BJ (cell line): ENCODE measurements at regions of chr3 and their contacts with region 1.

Region 1: GRCh38 chr3:131273401-131273800 is 108.2 kb upstream of the NUDT16 start:
- DNase-seq: no peak
- H3K4me3 ChIP-seq: no peak overlapping the region
- H3K27me3 ChIP-seq: no peaks in the 10 kb centered on the region
- CTCF ChIP-seq: no peak

Region 2: DNA sequence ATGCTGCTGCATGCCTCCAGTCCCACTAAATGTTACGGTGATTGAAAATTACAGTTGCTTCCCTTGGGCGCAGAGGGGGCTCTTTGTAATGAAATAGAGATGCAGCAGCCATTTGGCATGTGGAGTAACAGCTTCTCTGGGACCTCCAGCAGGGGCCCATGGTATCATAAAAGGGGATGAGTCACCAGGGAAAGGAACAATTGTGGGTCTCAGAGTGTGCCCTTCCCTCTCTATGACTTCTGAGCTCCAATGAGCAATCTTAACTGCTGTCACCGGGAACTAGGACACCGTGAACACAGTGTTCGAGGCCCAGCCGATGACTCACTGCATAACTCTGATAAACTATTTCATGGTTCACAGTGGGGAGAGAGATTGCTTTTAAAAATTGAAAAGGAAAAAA is 56.6 kb before region 1 on chr3:
- CTCF ChIA-PET with region 1: no interaction called
- POLR2A ChIA-PET with region 1: no interaction called
- DNase-seq: peak; percentile 35
- H3K4me3 ChIP-seq: no peak overlapping the region
- H3K27me3 ChIP-seq: no peaks in the 10 kb centered on the region
- CTCF ChIP-seq: no peak

Region 3: GRCh38 chr3:131250466-131250865 is 22.9 kb before region 1 on chr3:
- CTCF ChIA-PET with region 1: no interaction called
- POLR2A ChIA-PET with region 1: no interaction called
- DNase-seq: no peak
- H3K4me3 ChIP-seq: no peak overlapping the region
- H3K27me3 ChIP-seq: no peaks in the 10 kb centered on the region
- CTCF ChIP-seq: no peak

Region 4: DNA sequence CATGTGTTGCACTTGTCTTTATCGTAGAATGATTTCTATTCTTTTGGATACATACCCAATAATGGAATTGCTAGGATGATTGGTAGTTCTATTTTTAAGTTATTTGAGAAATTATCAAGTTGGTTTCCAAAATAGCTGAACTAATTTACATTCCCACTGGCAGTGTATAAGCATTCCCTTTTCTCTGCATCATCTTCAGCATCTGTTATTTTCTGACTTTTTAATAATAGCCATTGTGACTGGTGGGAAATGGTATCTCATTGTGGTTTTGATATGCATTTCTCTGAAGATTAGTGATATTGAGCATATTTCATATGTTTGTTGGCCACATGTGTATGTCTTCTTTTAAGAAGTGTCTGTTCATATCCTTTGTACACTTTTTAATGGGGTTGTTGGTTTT is 26.4 kb after region 1 on chr3:
- CTCF ChIA-PET with region 1: no interaction called
- POLR2A ChIA-PET with region 1: no interaction called
- DNase-seq: no peak
- H3K4me3 ChIP-seq: no peak overlapping the region
- H3K27me3 ChIP-seq: no peaks in the 10 kb centered on the region
- CTCF ChIP-seq: no peak

Region 5: DNA sequence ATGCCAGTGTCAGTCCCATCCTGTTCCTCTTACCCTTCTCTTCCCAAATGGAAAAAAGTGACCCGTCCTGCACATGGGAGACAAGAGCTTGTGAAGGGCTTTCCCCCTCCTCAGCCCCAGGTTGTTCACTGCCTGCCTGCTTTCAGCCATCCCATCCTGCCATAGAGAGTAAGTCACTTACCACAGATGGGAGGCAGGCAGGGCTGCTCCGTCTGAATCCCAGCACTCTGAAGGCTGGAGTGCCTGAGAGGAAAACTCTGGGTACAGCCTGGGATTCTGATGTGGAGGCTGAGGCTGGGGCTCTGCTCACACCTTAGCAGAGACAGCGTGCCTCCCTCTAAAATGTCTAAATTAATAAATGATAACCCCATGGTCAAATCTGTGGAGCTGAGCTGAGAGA is 746.7 kb after region 1 on chr3:
- CTCF ChIA-PET with region 1: no interaction called
- POLR2A ChIA-PET with region 1: interaction called, 10 read pairs
- DNase-seq: no peak
- H3K4me3 ChIP-seq: no peak overlapping the region
- H3K27me3 ChIP-seq: no peaks in the 10 kb centered on the region
- CTCF ChIP-seq: no peak